HCT116 (cell line): ENCODE measurements at regions of chr7 and their contacts with region 1.

Region 1: DNA sequence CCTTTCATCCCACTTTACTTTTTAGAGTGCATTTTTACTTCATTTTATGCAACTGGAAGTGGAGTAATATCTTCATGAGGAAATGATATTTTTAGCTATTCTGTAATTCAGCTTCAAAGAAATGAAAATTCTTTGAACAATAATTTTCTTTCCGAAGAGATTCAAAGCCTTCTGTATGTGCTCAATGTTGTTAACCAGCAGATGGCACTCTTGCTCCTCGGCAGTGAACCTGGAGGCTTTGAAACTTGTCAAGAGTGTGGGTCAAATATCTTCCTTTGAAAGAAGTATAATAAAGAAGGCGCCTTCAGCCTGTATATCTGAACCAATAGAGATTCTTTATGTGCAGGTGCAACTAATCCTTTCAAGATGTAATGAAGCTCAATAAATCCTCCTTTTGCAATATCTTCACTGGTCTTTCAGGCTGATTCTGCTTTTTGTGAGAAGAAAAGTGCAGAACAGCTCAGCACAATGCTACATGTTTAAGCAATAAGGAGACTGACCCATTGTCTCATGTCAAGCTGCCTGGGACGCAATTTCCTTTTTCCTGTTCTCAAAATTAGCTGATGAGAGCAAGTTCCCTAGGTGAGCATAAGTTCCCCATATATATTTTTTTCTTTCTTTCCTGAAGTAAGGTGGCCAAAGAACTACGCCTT is 258.4 kb downstream of the SEMA3A start:
- DNase-seq: peak; percentile 69
- ATAC-seq: peak; percentile 87
- H3K4me3 ChIP-seq: no peak overlapping the region
- H3K27ac ChIP-seq: no peak overlapping the region
- H3K4me1 ChIP-seq: no peaks in the 10 kb centered on the region
- H3K27me3 ChIP-seq: no peaks in the 10 kb centered on the region
- CTCF ChIP-seq: peak; percentile 81 to 92 (median 89)
- POLR2A ChIP-seq: no peak
- RAD21 ChIP-seq: peak; percentile 91

Region 2: GRCh38 chr7:83947260-83947659 is 11.1 kb after region 1 on chr7:
- CTCF ChIA-PET with region 1: interaction called, 37 read pairs
- POLR2A ChIA-PET with region 1: no interaction called
- RAD21 ChIA-PET with region 1: no interaction called
- intact Hi-C with region 1: no loop called
- DNase-seq: peak; percentile 19
- ATAC-seq: peak; percentile 89
- H3K4me3 ChIP-seq: no peak overlapping the region
- H3K27ac ChIP-seq: no peak overlapping the region
- H3K4me1 ChIP-seq: no peaks in the 10 kb centered on the region
- H3K27me3 ChIP-seq: no peaks in the 10 kb centered on the region
- CTCF ChIP-seq: peak; percentile 20 to 80 (median 76); a peak in 5 of 6 replicates
- POLR2A ChIP-seq: no peak
- RAD21 ChIP-seq: peak; percentile 42; the same call in 1 of the 2 replicates

Region 3: GRCh38 chr7:84187813-84188510 is 251.8 kb after region 1 on chr7:
- CTCF ChIA-PET with region 1: no interaction called
- POLR2A ChIA-PET with region 1: no interaction called
- RAD21 ChIA-PET with region 1: no interaction called
- intact Hi-C with region 1: no loop called
- DNase-seq: no peak
- ATAC-seq: no peak; the same call in 1 of the 2 replicates
- H3K4me3 ChIP-seq: no peak overlapping the region
- H3K27ac ChIP-seq: no peak overlapping the region
- H3K4me1 ChIP-seq: peaks cover 5 to 27% of the 10 kb centered on the region in 2 experiments; a peak in 3 of 4 replicates
- H3K27me3 ChIP-seq: no peaks in the 10 kb centered on the region
- CTCF ChIP-seq: no peak
- POLR2A ChIP-seq: no peak
- RAD21 ChIP-seq: no peak